ENCODE measurements at regions of chr2 and their contacts with region 1.

Region 1: GRCh38 chr2:2014251-2014771 is 270.0 kb upstream of the PXDN start:
- DNase-seq: peak; percentile 80 to 81
- ATAC-seq: peak; percentile 58
- H3K4me3 ChIP-seq: no peak overlapping the region
- H3K27ac ChIP-seq: peak overlapping the region in 1 of 2 donors; percentile 21
- H3K4me1 ChIP-seq: no peaks in the 10 kb centered on the region
- H3K27me3 ChIP-seq: no peaks in the 10 kb centered on the region

Region 2: DNA sequence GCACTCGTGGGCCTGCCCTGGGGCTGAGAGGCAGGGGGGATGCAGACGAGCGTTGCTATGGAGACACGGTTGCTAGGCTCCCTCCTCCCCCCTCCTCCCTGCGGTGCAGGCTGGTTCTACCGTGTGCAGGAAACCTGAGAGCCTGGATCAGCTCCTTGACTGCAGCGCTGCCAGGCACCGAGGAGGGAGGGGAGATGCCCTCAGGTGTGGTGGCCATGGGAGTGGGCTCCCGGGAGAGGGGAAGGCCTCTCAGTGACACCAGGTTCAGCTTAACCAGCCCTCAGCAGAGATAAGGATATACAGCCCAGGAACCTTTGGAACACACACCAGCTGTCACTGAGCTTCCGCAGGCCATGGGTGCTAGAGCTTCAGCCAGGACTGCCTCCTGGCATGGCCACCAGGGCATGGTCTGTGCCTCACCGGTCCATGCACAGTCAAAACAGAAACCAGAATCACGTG is 145.6 kb before region 1 on chr2:
- intact Hi-C with region 1: loop called in 1 of 2 experiments (anchors 10 kb)
- DNase-seq: no peak
- ATAC-seq: no peak
- H3K4me3 ChIP-seq: no peak overlapping the region
- H3K27ac ChIP-seq: no peak overlapping the region
- H3K4me1 ChIP-seq: no peaks in the 10 kb centered on the region
- H3K27me3 ChIP-seq: no peaks in the 10 kb centered on the region

Region 3: GRCh38 chr2:2057125-2057721 is 42.9 kb after region 1 on chr2:
- intact Hi-C with region 1: no loop called
- DNase-seq: peak; percentile 52 to 79
- ATAC-seq: peak; percentile 76
- H3K4me3 ChIP-seq: no peak overlapping the region
- H3K27ac ChIP-seq: no peak overlapping the region
- H3K4me1 ChIP-seq: no peaks in the 10 kb centered on the region
- H3K27me3 ChIP-seq: no peaks in the 10 kb centered on the region

Region 4: GRCh38 chr2:2095360-2096093 is 81.2 kb after region 1 on chr2:
- intact Hi-C with region 1: no loop called
- DNase-seq: no peak
- ATAC-seq: no peak
- H3K4me3 ChIP-seq: no peak overlapping the region
- H3K27ac ChIP-seq: no peak overlapping the region
- H3K4me1 ChIP-seq: no peaks in the 10 kb centered on the region
- H3K27me3 ChIP-seq: no peaks in the 10 kb centered on the region